Sciatic nerve (tissue), 2 donors: ENCODE measurements at regions of chr20 and their contacts with region 1.

Region 1: GRCh38 chr20:9912858-9913434 is 74.1 kb upstream of the PAK5 start:
- DNase-seq: peak; percentile 58
- ATAC-seq: no peak

Region 2: DNA sequence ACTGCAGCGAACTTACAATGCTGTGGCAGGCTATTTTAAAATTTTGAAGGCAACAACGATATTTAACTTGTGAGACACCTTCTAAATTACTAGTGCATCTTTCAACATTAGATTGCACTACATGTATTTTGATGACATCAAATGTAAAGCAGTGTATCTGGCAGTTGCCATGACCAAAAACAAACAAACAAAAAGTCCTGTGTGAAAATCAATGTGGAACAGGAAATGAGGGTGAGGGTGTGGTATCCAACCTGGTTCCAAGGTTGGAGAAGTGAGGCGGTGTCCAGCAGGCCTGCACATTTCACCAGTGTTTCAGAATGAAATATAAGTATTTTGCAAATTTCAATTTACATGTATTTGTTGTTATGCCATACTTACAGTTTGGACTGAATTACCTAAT is 286.6 kb before region 1 on chr20:
- intact Hi-C with region 1: loop called (anchors 10 kb)
- DNase-seq: no peak
- ATAC-seq: no peak

Region 3: DNA sequence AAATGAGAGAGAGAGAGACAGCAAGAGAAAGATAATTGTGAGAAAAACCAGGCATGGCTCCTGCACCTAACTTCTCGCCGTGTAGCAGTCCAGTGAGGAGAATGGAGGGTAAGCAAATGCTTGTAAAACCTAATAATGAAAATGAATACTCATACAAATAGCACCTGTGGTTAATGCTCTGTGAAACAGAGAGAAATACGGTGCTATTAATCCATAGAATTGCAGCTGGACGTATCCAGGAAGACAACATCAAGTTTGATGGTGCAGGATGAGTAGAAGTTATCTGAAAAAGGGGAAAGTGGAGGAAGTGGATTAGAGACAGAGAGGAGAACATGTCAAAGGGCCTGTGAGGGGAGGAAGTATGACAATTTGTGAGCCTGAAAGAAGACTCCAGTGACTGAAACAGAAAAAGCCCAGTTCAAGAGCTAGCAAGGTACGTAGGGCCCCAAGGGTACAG is 15.4 kb after region 1 on chr20:
- intact Hi-C with region 1: no loop called
- DNase-seq: no peak
- ATAC-seq: no peak